ENCODE measurements at regions of chr4 and their contacts with region 1.

Region 1: GRCh38 chr4:173990126-173990868 is 293.2 kb downstream of the FBXO8 start:
- DNase-seq: peak; percentile 34

Region 2: DNA sequence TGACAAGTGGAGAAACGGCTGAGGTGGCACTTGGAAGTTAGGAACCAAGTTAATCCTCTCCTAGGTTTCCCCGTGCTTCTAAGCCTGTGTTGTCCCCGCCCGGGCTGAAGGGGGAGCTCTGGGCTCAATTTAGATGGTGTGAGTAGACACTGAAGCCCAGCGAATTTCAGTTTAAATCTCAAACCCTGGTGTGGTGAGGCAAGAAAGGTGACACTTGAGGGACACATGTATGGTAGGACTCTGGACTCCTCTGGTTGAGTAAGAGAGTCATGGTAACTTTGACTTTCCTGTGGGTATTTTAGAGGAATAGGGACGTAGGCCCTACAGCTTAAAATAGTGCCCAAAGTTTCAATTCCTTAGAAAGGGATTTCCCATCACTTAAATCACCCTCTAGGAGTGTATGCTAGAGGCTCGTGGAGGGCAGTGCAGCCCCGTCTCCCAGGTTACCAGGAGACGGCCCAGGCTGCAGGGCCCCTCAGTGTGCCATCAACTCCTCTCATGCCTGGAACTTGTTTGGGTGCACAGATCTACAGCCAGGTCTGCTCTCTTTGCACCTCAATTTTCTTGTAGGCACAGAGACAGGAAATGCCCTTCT is 484.3 kb before region 1 on chr4:
- CTCF ChIA-PET with region 1: interaction called, 13 read pairs
- POLR2A ChIA-PET with region 1: no interaction called
- DNase-seq: peak; percentile 75

Measured in HEK293T (cell line).